PC-3 (cell line): ENCODE measurements at regions of chr20 and their contacts with region 1.

Region 1: GRCh38 chr20:41261790-41262717 is 55.5 kb downstream of the ZHX3 start:
- DNase-seq: peak; percentile 15
- ATAC-seq: peak; percentile 72
- H3K4me3 ChIP-seq: no peak overlapping the region
- H3K27ac ChIP-seq: no peak overlapping the region
- H3K4me1 ChIP-seq: no peaks in the 10 kb centered on the region
- H3K27me3 ChIP-seq: no peaks in the 10 kb centered on the region
- CTCF ChIP-seq: no peak

Region 2: DNA sequence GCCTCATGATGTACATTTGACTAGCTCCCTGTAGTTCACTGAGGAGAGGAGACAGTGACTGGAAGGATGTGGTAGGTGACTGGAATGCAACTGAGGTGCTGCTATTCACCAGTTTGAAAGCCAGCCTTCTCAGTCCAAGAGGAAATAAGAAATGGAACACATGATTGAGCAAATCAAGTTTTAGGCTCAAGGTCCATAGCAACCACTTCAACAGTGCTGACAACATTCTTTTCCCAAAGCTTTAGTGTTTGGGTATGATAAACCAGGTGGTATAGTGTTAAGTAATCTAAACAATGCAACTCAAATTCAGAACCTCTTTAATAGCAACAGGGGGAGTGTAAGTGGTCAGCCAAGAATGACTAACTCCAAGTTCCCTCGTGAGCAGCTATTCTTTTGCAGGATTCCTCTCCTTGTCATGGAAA is 46.2 kb after region 1 on chr20:
- CTCF ChIA-PET with region 1: no interaction called
- POLR2A ChIA-PET with region 1: interaction called, 14 read pairs
- intact Hi-C with region 1: no loop called
- DNase-seq: peak; percentile 15
- ATAC-seq: no peak
- H3K4me3 ChIP-seq: no peak overlapping the region
- H3K27ac ChIP-seq: no peak overlapping the region
- H3K4me1 ChIP-seq: peaks cover 10% of the 10 kb centered on the region; the same call in 1 of the 2 replicates
- H3K27me3 ChIP-seq: no peaks in the 10 kb centered on the region
- CTCF ChIP-seq: no peak

Region 3: GRCh38 chr20:41352108-41352507 is 90.1 kb after region 1 on chr20:
- CTCF ChIA-PET with region 1: no interaction called
- POLR2A ChIA-PET with region 1: no interaction called
- intact Hi-C with region 1: no loop called
- DNase-seq: no peak
- ATAC-seq: peak; percentile 29; the same call in 1 of the 2 replicates
- H3K4me3 ChIP-seq: no peak overlapping the region
- H3K27ac ChIP-seq: no peak overlapping the region
- H3K4me1 ChIP-seq: no peaks in the 10 kb centered on the region
- H3K27me3 ChIP-seq: no peaks in the 10 kb centered on the region
- CTCF ChIP-seq: peak; percentile 18; the same call in 1 of the 2 replicates